Mammary epithelial cell (primary cell): ENCODE measurements at regions of chr14 and their contacts with region 1.

Region 1: GRCh38 chr14:77007975-77008421 is 20.5 kb downstream of the IRF2BPL start:
- DNase-seq: peak; percentile 68
- H3K4me3 ChIP-seq: no peak overlapping the region
- H3K27ac ChIP-seq: peak overlapping the region; percentile 80
- H3K4me1 ChIP-seq: peaks cover 48% of the 10 kb centered on the region
- H3K27me3 ChIP-seq: no peaks in the 10 kb centered on the region
- CTCF ChIP-seq: no peak

Region 2: GRCh38 chr14:76962303-76962660 is 45.7 kb before region 1 on chr14:
- CTCF ChIA-PET with region 1: no interaction called
- dilution Hi-C with region 1: no loop called
- in situ Hi-C with region 1: no loop called
- intact Hi-C with region 1: loop called (anchors 5 kb)
- DNase-seq: no peak
- H3K4me3 ChIP-seq: peak overlapping the region; percentile 7 to 43 (median 24)
- H3K27ac ChIP-seq: peak overlapping the region; percentile 49
- H3K4me1 ChIP-seq: peaks cover 54% of the 10 kb centered on the region
- H3K27me3 ChIP-seq: no peaks in the 10 kb centered on the region
- CTCF ChIP-seq: no peak

Region 3: GRCh38 chr14:76977793-76978720 is 29.9 kb before region 1 on chr14:
- CTCF ChIA-PET with region 1: no interaction called
- dilution Hi-C with region 1: no loop called
- in situ Hi-C with region 1: no loop called
- intact Hi-C with region 1: no loop called
- DNase-seq: no peak
- H3K4me3 ChIP-seq: no peak overlapping the region
- H3K27ac ChIP-seq: no peak overlapping the region
- H3K4me1 ChIP-seq: peaks cover 7% of the 10 kb centered on the region
- H3K27me3 ChIP-seq: no peaks in the 10 kb centered on the region
- CTCF ChIP-seq: no peak